GM18951 (cell line): ENCODE measurements at regions of chr20 and their contacts with region 1.

Region 1: DNA sequence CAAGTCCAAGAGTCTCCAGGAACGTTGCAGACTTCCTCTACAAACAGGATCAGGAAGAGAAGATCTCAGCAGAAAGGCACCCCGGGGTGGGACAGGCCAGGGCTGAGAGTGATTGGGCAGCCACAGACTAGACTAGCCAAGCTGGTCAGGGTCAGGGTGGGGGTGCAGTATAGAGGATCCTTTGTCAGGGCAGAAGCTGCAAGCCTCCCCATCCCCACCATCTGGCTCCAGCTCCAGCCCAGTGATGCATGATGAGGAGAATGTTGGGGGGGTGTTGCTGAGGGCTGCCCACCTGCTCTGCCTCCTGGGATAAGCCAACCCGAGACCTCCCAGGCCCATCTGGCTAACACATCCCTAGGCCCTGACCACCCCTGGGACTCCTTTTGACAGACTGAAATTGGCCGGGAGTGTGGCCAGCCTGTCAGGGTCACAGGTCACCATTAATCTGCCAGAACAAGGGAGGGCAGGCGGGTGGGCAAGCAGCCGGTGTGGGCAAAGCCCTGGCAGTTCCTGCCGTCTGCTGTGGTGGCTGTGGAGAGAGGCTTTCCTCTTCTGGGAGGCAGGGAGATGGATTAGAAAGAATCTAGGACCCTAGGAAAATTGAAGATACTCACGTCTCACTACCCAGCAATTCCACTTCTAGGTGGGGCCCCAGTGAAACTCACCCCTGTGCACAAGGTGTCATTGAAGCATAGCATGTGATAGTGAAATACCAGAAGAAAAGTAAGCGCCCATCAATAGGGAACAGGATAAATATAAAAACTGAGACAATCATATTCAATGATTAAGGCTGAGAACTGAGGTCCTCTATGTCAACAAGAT is 22.1 kb upstream of the SNTA1 start:
- POLR2A ChIP-seq: no peak

Region 2: GRCh38 chr20:33638726-33639125 is 173.0 kb after region 1 on chr20:
- in situ Hi-C with region 1: loop called (anchors 10 kb)
- POLR2A ChIP-seq: no peak

Region 3: DNA sequence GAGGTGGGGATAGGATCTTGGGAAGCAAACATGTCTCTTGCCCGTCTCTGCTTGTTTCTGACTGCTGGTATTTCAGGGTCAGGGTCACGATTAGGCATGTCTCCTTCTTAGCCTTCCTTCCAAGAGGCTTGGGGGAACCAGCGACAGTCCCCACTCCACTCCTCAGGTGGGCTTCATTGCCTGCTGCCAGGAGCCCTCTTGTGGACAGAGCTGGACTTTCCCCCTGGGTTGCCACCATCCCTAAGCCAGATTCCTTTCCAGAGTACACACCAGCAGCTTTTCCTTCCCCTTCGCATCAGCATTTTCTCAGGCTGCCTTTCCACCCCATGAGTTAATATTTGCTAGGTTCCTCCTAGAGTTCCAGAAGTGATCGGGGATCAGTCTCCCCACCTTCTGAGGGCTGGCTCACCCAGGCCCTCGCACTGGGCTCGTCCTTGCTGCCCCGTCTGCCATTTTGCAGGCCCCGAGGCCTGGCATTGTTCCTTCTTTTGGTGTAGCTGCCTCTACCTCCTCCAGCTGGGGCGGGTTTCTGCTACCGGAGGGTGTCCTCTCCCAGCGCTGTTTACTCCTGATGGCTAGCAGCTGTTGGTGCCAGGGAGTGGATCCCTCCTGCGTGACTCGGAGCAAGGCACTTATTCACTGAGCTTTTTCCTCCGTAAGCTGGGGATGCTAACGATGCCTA is 187.7 kb after region 1 on chr20:
- in situ Hi-C with region 1: no loop called
- POLR2A ChIP-seq: no peak

Region 4: DNA sequence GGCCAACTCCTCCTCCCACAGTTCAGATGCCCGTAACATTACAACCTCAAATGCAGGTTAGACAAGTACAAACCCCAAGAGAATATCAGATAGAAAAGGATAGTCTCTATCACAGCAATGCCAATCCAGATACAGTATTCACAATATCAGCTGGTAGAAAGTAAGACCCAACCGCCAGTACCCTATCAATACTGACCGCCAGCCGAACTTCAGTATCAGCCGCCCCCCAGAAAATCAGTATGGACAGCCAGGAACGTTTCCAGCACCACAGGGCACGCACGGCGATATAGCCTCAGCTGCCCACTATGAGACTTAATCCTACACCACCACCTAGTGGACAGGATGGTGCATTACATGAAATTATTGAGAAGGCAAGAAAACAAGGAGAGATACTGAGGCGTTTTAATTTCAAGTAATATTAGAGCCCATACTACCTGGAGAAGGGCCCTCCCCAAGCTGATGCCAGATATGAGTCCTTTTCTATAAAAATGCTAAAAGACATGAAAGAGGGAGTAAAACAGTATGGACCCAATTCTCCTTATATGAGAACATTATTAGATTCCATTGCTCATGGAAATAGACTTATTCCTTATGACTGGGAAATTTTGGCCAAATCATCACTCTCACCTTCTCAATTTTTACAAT is 663.9 kb after region 1 on chr20:
- in situ Hi-C with region 1: loop called (anchors 25 kb)
- POLR2A ChIP-seq: no peak